Cardiac septum (tissue), 1 donor: ENCODE measurements at regions of chrX and their contacts with region 1.

Region 1: GRCh38 chrX:111244235-111244750 is 26.0 kb downstream of the CAPN6 start:
- DNase-seq: no peak

Region 2: DNA sequence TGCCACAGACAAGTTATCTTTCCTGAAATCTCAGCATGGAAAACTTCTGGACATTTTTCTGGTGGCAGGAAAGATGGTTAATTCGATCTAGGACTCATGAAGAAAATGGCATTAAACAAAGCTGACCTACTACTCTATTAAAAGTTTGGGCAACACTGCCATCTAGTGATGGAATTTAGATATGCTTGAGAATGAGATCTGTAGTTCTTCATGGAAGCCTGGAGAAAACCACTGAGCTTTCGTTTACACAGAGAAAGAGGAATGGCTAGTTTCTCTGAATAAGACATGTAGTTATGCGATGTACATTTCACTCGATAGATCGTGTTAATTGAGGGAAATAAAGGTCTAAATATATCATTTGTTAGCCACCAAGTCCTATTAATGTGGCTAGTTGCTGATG is 397.0 kb before region 1 on chrX:
- intact Hi-C with region 1: loop called (anchors 10 kb)
- DNase-seq: no peak

Region 3: GRCh38 chrX:111098874-111099273 is 145.4 kb before region 1 on chrX:
- intact Hi-C with region 1: no loop called
- DNase-seq: no peak

Region 4: GRCh38 chrX:111231251-111231650 is 13.0 kb before region 1 on chrX:
- intact Hi-C with region 1: no loop called
- DNase-seq: no peak